ENCODE measurements at regions of chr21 and their contacts with region 1.

Region 1: GRCh38 chr21:31161157-31161556 is 122.9 kb upstream of the KRTAP19-8 start:
- DNase-seq: no peak
- H3K4me3 Mint-ChIP-seq: no peak overlapping the region
- H3K27ac Mint-ChIP-seq: no peak overlapping the region
- H3K4me1 Mint-ChIP-seq: peaks cover 55% of the 10 kb centered on the region
- H3K27me3 Mint-ChIP-seq: no peaks in the 10 kb centered on the region

Region 2: GRCh38 chr21:31141389-31142000 is 19.7 kb before region 1 on chr21:
- intact Hi-C with region 1: no loop called
- DNase-seq: no peak
- H3K4me3 Mint-ChIP-seq: no peak overlapping the region
- H3K27ac Mint-ChIP-seq: peak overlapping the region; percentile 15
- H3K4me1 Mint-ChIP-seq: peaks cover 25% of the 10 kb centered on the region
- H3K27me3 Mint-ChIP-seq: no peaks in the 10 kb centered on the region

Region 3: GRCh38 chr21:31173881-31174555 is 12.9 kb after region 1 on chr21:
- intact Hi-C with region 1: loop called (anchors 1 kb)
- DNase-seq: peak; percentile 69
- H3K4me3 Mint-ChIP-seq: peak overlapping the region; percentile 69
- H3K27ac Mint-ChIP-seq: peak overlapping the region; percentile 81
- H3K4me1 Mint-ChIP-seq: peaks cover 67% of the 10 kb centered on the region
- H3K27me3 Mint-ChIP-seq: no peaks in the 10 kb centered on the region

Measured in activated CD4-positive, alpha-beta T cell treated with anti-CD3 and anti-CD28 coated beads, Interleukin-2, amount 10 ng/mL, durations not matched to agents 24 days and 14 days (primary cell).